ENCODE measurements at regions of chr10 and their contacts with region 1.

Region 1: GRCh38 chr10:62048919-62049623 is 147.6 kb downstream of the ARID5B start:
- DNase-seq: peak; percentile 85
- H3K4me3 ChIP-seq: peak overlapping the region; percentile 30 to 32
- H3K27ac ChIP-seq: peak overlapping the region; percentile 85 to 87
- H3K4me1 ChIP-seq: peaks cover 13% of the 10 kb centered on the region
- H3K27me3 ChIP-seq: no peaks in the 10 kb centered on the region
- CTCF ChIP-seq: no peak
- POLR2A ChIP-seq: peak; percentile 85

Region 2: GRCh38 chr10:62082729-62083411 is 33.8 kb after region 1 on chr10:
- intact Hi-C with region 1: loop called (anchors 5 kb)
- DNase-seq: no peak
- H3K4me3 ChIP-seq: no peak overlapping the region
- H3K27ac ChIP-seq: peak overlapping the region; percentile 68 to 71
- H3K4me1 ChIP-seq: peaks cover 21% of the 10 kb centered on the region
- H3K27me3 ChIP-seq: no peaks in the 10 kb centered on the region
- CTCF ChIP-seq: no peak
- POLR2A ChIP-seq: no peak

Region 3: GRCh38 chr10:62095181-62096071 is 46.4 kb after region 1 on chr10:
- intact Hi-C with region 1: no loop called
- DNase-seq: peak; percentile 50
- H3K4me3 ChIP-seq: no peak overlapping the region
- H3K27ac ChIP-seq: peak overlapping the region; percentile 47 to 60
- H3K4me1 ChIP-seq: peaks cover 26% of the 10 kb centered on the region
- H3K27me3 ChIP-seq: no peaks in the 10 kb centered on the region
- CTCF ChIP-seq: no peak
- POLR2A ChIP-seq: no peak